IMR-90 (cell line): ENCODE measurements at regions of chr3 and their contacts with region 1.

Region 1: DNA sequence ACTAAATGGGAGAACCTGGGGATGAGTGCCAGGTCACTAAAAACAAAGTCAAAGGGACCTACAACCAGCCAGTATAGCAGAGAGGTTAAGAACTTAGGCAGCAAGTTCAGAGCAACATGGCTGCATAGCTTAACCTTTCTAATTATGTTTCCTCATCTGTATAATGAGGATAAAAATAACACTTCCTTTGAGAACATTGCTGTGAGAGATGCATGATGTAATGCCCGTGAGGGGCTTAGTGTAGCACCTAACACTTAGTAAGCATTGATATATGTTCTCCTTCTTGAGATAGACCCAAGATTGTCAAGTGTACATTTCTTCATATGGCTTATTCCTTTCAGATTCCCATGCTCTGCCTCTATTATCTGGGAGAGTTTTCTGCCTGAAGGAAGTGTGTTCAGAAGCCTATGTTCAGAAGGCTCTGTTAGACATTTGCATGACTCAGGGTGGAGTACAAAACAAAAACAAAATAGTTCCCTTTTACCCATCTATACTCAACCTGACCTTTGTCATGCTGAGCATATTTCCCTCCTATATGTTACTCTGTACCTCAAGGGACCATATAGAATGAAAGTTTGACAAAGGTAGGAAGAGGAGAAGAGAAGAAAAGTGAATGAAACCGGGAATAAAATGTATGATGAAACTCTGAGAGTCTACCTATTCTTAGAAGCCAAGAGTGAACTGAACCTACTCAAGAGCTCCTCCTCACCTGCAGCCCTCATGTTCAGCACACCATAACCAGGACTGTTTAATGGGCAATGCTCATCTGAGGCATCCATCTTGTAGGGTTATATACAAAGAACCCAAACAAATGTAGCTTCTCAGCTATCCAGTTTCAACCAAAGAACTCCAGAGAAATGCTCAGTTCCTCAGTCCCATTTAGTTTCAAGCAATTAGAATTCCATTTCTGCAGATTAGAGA is 70.7 kb upstream of the KCNMB2 start:
- DNase-seq: no peak
- ATAC-seq: no peak
- H3K4me3 ChIP-seq: no peak overlapping the region
- H3K27ac ChIP-seq: no peak overlapping the region
- H3K4me1 ChIP-seq: no peaks in the 10 kb centered on the region
- H3K27me3 ChIP-seq: no peaks in the 10 kb centered on the region
- CTCF ChIP-seq: no peak
- POLR2A ChIP-seq: no peak
- RAD21 ChIP-seq: no peak

Region 2: GRCh38 chr3:178960181-178960580 is 494.7 kb after region 1 on chr3:
- CTCF ChIA-PET with region 1: no interaction called
- POLR2A ChIA-PET with region 1: interaction called, 16 read pairs
- dilution Hi-C with region 1: no loop called
- in situ Hi-C with region 1: no loop called
- intact Hi-C with region 1: no loop called
- DNase-seq: peak; percentile 9
- ATAC-seq: peak; percentile 27
- H3K4me3 ChIP-seq: no peak overlapping the region
- H3K27ac ChIP-seq: no peak overlapping the region
- H3K4me1 ChIP-seq: no peaks in the 10 kb centered on the region
- H3K27me3 ChIP-seq: peaks cover 2% of the 10 kb centered on the region; the same call in 1 of the 2 replicates
- CTCF ChIP-seq: no peak
- POLR2A ChIP-seq: no peak
- RAD21 ChIP-seq: no peak